Activated CD4-positive, alpha-beta T cell treated with anti-CD3 and anti-CD28 coated beads, Interleukin-2, amount 10 ng/mL, durations not matched to agents 24 days and 14 days (primary cell): ENCODE measurements at regions of chr7 and their contacts with region 1.

Region 1: GRCh38 chr7:43758029-43758821 is at the start of gene BLVRA:
- DNase-seq: peak; percentile 93
- H3K4me3 Mint-ChIP-seq: peak within 1 kb of the TSS; percentile 80
- H3K27ac Mint-ChIP-seq: peak within 1 kb of the TSS; percentile 76
- H3K4me1 Mint-ChIP-seq: peaks cover 44% of the 10 kb centered on the region
- H3K27me3 Mint-ChIP-seq: peaks cover 3% of the 10 kb centered on the region
- total RNA-seq, gene BLVRA: 39.9 and 43.4 TPM in 2 replicates

Region 2: DNA sequence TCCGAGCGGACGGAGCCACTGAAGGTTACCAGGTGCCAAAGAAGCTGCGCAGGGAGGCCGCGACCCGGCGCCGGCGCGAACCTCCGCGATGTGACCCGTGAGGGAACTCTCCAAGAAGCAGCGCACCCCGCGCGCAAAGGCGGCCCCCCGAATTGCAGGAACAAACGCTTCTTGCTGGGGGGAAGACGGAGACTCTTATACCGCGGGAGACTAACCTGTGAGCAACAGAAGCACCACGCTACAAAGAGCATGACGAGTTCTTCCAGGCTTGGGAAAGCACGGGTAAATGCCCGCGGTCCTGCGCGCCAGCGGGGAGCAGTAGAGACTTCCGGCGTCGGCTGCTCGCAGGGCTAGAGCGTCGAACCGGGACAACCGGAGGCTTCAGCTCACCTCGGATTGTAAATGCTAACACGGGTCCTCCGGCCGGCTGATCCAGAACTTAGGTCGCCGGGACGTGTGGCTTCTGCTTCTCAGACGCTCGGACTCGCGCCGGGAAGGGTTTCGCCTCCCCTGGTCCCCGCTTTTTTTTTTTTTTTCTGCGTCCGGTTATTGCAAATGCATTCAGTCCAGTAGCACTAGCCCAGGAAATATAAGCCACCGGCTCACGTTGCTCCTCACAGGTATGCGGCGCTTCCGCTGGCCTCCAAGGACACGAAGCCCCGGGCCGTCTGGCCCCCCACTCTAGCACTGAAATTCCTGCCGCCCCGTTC is 28.9 kb before region 1 on chr7 and contains the start of gene COA1:
- intact Hi-C with region 1: loop called (anchors 1 kb)
- DNase-seq: peak; percentile 95
- H3K4me3 Mint-ChIP-seq: peak within 1 kb of the TSS; percentile 94
- H3K27ac Mint-ChIP-seq: peak within 1 kb of the TSS; percentile 89
- H3K4me1 Mint-ChIP-seq: peaks cover 26% of the 10 kb centered on the region
- H3K27me3 Mint-ChIP-seq: peaks cover 3% of the 10 kb centered on the region
- total RNA-seq, gene COA1: 79.0 and 79.3 TPM in 2 replicates

Region 3: DNA sequence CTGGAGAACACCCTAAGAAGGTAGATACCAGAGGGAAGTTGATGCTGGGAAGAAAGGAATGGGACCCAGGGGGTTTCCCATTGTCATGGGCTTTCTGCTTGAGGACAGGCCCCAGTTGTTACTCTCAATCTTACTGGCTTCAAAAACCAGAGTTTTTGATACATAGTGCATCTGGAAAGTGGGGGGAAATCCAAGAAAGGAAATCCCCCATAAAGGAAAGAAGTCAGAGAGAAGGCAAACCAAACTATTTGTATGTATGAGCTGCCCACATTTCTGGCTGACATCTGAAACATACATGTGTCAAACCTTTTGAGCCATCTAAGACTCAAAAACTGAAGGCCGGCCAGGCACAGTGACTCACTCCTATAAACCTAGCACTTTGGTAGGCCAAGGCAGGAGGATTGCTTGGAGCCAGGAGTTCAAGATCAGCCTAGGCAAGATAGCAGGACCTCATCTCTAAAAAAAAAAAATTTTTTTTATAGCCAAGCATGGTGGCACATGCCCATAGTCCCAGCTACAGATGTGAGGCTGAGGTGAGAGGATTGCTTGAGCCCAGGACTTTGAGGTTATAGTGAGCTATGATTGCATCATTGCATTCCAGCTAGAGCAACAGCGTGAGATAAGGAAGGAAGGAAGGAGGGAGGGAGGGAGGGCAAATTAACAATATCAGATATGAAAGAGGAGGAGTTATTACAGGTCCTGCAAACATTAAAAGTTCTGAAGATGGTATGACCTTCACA is 22.3 kb before region 1 on chr7:
- intact Hi-C with region 1: loop called (anchors 1 kb)
- DNase-seq: peak; percentile 63
- H3K4me3 Mint-ChIP-seq: no peak overlapping the region
- H3K27ac Mint-ChIP-seq: peak overlapping the region; percentile 85
- H3K4me1 Mint-ChIP-seq: peaks cover 17% of the 10 kb centered on the region
- H3K27me3 Mint-ChIP-seq: peaks cover 3% of the 10 kb centered on the region

Region 4: GRCh38 chr7:43850348-43851116 is 92.3 kb after region 1 on chr7:
- intact Hi-C with region 1: no loop called
- DNase-seq: no peak
- H3K4me3 Mint-ChIP-seq: no peak overlapping the region
- H3K27ac Mint-ChIP-seq: no peak overlapping the region
- H3K4me1 Mint-ChIP-seq: no peaks in the 10 kb centered on the region
- H3K27me3 Mint-ChIP-seq: peaks cover 11% of the 10 kb centered on the region